ENCODE measurements at regions of chr2 and their contacts with region 1.

Region 1: DNA sequence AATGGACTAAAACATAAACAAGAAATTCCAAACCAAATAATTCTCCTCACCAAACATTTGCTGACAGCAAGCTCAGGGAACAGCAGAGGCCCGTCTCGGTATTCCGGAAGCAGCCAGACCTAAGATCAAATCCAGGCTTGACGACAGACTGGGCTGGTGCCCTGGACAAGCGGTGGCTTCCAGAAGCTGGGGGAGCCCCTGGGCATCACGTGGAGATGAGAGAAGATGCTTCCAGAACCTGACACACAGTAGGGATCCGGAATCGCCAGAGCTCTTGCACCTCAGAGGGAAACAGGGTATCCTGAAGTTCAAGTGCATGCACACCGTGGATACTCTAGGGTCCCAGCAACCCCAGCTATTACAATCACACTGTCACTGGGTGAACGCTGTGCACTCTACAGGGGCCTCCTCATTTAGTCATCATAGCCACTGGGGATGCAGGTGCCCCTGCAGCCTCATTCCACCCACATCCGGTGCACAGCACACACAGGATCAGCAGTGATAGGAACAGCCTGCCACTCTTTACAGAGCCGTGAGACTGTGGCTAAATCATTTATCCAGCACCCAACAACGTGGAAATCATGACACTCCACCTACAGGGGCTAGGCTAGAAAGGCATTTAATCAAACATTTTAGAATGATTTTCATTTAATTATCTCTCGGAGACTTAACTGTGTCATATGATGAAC is 102.6 kb downstream of the HDAC4 start:
- DNase-seq: peak; percentile 66 to 91 (median 82)
- H3K4me3 ChIP-seq: peak overlapping the region; percentile 86
- H3K4me3 Mint-ChIP-seq: peak overlapping the region; percentile 73 to 92 (median 88)
- H3K27ac ChIP-seq: peak overlapping the region; percentile 48
- H3K27ac Mint-ChIP-seq: peak overlapping the region; percentile 83 to 98 (median 96)
- H3K4me1 ChIP-seq: peaks cover 59% of the 10 kb centered on the region
- H3K4me1 Mint-ChIP-seq: peaks cover 50 to 72% (median 55%) of the 10 kb centered on the region in 3 donors
- H3K27me3 ChIP-seq: no peaks in the 10 kb centered on the region
- H3K27me3 Mint-ChIP-seq: peaks cover 0 to 1% of the 10 kb centered on the region in 2 donors

Region 2: GRCh38 chr2:239275044-239275685 is 23.1 kb before region 1 on chr2:
- CTCF ChIA-PET with region 1: interaction called, 10 read pairs
- POLR2A ChIA-PET with region 1: interaction called, 4 read pairs
- DNase-seq: peak; percentile 72 to 92 (median 73)
- H3K4me3 ChIP-seq: peak overlapping the region; percentile 54
- H3K4me3 Mint-ChIP-seq: peak overlapping the region; percentile 44 to 91 (median 88)
- H3K27ac ChIP-seq: peak overlapping the region; percentile 73
- H3K27ac Mint-ChIP-seq: peak overlapping the region; percentile 78 to 98 (median 96)
- H3K4me1 ChIP-seq: peaks cover 41% of the 10 kb centered on the region
- H3K4me1 Mint-ChIP-seq: peaks cover 45 to 82% (median 47%) of the 10 kb centered on the region in 3 donors
- H3K27me3 ChIP-seq: no peaks in the 10 kb centered on the region
- H3K27me3 Mint-ChIP-seq: peaks cover 0 to 3% of the 10 kb centered on the region in 2 donors

Region 3: GRCh38 chr2:239315308-239315707 is 17.0 kb after region 1 on chr2:
- CTCF ChIA-PET with region 1: no interaction called
- POLR2A ChIA-PET with region 1: no interaction called
- DNase-seq: peak in 1 of 5 donors; percentile 37
- H3K4me3 ChIP-seq: no peak overlapping the region
- H3K4me3 Mint-ChIP-seq: peak overlapping the region; percentile 26 to 80 (median 73)
- H3K27ac ChIP-seq: no peak overlapping the region
- H3K27ac Mint-ChIP-seq: peak overlapping the region; percentile 35 to 86 (median 62)
- H3K4me1 ChIP-seq: peaks cover 8% of the 10 kb centered on the region
- H3K4me1 Mint-ChIP-seq: peaks cover 39 to 41% (median 40%) of the 10 kb centered on the region in 3 donors
- H3K27me3 ChIP-seq: no peaks in the 10 kb centered on the region
- H3K27me3 Mint-ChIP-seq: peaks cover 0 to 3% of the 10 kb centered on the region in 2 donors

Region 4: DNA sequence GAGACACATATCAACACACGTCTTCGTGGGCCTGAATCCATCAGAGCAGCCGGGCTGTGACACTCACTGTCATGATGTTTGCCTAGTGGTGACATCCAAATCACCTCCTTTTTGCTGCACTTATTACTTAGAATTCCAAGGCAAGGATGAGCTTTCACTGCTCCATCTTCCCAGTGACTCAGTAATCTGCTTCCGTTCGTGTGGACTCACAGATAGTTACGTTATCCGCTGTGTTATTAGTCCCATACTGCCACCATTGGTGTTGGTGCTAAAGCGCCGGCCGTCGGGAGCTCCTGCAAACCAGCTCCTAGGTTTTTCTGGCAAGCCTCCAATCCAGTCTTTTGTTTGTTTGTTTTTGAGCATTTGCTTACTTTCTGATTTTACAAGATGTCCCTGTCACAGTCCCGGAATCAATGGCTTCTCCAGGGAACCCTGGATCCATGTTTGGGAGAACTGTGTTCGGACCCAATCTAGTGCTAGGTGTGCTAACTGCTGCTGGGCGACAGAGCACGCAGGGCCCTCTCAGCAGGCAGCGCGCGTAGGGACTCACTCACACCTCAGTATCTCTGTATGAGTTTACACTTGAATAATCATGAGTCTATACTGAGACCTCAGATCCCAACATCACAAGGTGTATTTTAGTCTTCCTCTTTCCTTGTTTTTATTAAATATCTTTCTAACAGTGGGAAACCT is 59.9 kb after region 1 on chr2:
- CTCF ChIA-PET with region 1: no interaction called
- POLR2A ChIA-PET with region 1: interaction called, 20 read pairs
- DNase-seq: no peak
- H3K4me3 ChIP-seq: no peak overlapping the region
- H3K4me3 Mint-ChIP-seq: no peak overlapping the region
- H3K27ac ChIP-seq: no peak overlapping the region
- H3K27ac Mint-ChIP-seq: peak overlapping the region in 3 of 8 donors; percentile 17 to 72 (median 29)
- H3K4me1 ChIP-seq: no peaks in the 10 kb centered on the region
- H3K4me1 Mint-ChIP-seq: peaks cover 4 to 6% (median 4%) of the 10 kb centered on the region in 3 donors
- H3K27me3 ChIP-seq: no peaks in the 10 kb centered on the region
- H3K27me3 Mint-ChIP-seq: no peaks in the 10 kb centered on the region

Measured in CD8-positive, alpha-beta memory T cell (primary cell).